Calu3 (cell line): ENCODE measurements at regions of chr12 and their contacts with region 1.

Region 1: DNA sequence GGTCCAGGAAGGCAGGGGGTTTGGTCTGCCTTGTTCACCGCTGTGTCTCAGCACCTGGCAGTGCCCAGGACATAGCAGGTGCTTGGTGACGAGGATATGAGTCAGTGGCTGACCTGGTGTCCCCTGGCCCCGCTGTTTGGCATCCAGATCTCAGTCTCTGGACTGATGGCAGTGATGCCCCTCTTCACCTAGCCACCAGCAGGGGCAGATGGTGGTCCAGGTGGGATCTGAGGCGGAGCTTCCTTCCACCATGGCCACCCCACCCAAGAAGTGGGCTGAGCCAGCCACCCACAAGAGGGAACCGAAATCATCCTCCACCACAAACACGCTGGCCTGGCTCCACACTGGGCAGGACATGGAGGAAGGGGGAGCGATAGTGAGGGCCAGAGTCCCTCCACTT is 16.1 kb upstream of the SH2B3 start:
- DNase-seq: peak; percentile 71
- H3K4me3 Mint-ChIP-seq: no peak overlapping the region
- H3K27ac Mint-ChIP-seq: no peak overlapping the region
- H3K4me1 Mint-ChIP-seq: peaks cover 13% of the 10 kb centered on the region
- H3K27me3 Mint-ChIP-seq: no peaks in the 10 kb centered on the region
- CTCF ChIP-seq: no peak

Region 2: DNA sequence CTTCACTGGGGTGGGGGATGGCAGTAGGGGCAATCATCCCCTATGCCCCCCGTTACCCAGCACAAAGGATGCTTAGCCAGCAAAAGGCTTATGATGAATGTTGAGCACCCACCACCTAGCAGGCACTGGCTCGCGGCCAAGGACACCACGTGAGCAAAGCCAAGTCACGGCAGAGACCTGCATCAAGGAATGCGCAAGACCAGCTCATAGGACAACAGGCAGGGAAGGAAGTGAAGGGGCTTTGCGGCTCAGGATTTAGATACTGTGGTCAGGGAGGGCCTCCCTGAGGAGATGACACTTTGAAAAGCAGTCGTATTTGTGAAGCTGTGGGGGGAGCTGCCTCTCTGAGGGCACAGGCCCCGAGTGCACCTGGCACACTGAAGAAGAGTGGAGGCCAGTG is 48.8 kb after region 1 on chr12:
- CTCF ChIA-PET with region 1: interaction called, 11 read pairs
- intact Hi-C with region 1: no loop called
- DNase-seq: peak; percentile 80
- H3K4me3 Mint-ChIP-seq: peak overlapping the region; percentile 26
- H3K27ac Mint-ChIP-seq: peak overlapping the region; percentile 69
- H3K4me1 Mint-ChIP-seq: peaks cover 44% of the 10 kb centered on the region
- H3K27me3 Mint-ChIP-seq: no peaks in the 10 kb centered on the region
- CTCF ChIP-seq: no peak

Region 3: GRCh38 chr12:111705672-111706071 is 316.0 kb after region 1 on chr12:
- CTCF ChIA-PET with region 1: no interaction called
- intact Hi-C with region 1: no loop called
- DNase-seq: no peak
- H3K4me3 Mint-ChIP-seq: no peak overlapping the region
- H3K27ac Mint-ChIP-seq: no peak overlapping the region
- H3K4me1 Mint-ChIP-seq: no peaks in the 10 kb centered on the region
- H3K27me3 Mint-ChIP-seq: no peaks in the 10 kb centered on the region
- CTCF ChIP-seq: no peak